ENCODE measurements at regions of chr17 and their contacts with region 1.

Region 1: DNA sequence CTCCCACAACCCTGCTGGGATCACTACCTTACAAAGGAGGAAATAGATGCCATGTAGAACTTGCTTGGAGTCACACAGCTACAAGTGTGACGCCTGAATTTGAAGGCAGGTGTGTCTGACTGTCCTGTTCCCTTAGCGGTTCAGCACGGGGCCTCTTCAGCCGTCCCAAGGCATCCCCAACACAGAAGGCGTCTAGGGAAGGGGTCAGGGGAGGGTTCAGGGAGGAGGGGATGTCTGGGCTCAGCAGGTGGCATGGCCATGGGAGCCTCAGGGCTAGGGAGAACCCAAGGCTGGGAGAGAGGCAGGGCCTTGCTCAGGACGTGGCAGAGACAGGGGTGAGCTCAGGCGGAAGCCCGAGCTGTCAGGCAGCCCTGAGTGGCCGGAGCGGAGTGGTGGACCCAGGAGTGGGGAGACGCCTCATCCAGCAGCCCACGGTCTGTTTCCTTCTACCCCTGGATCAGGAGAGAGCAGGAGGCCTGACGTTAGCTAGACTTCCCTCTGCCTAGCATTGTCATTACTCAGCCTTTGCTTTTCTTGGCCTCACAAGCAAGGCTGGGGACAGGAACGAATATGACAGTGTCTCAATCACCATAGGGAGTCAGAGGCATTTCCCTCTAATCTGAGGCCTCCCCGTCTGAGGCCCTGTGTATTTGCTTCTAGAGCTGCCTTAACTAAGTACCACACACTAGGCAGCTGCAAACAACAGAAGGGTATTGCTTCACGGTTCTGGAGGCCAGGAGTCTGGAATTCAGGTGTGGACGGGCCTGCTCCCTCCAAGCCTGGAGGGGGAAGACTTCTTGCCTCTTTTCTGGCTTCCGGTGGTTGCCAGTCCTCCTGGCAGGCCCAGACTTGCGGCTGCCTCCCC is 31.3 kb upstream of the ANKRD40CL start:
- DNase-seq: peak; percentile 85
- H3K4me3 ChIP-seq: no peak overlapping the region
- H3K27ac ChIP-seq: peak overlapping the region; percentile 53
- H3K4me1 ChIP-seq: peaks cover 27% of the 10 kb centered on the region
- H3K27me3 ChIP-seq: no peaks in the 10 kb centered on the region
- CTCF ChIP-seq: no peak

Region 2: GRCh38 chr17:50699410-50700074 is 99.1 kb before region 1 on chr17:
- CTCF ChIA-PET with region 1: no interaction called
- dilution Hi-C with region 1: loop called (anchors 5 kb)
- in situ Hi-C with region 1: no loop called
- intact Hi-C with region 1: no loop called
- DNase-seq: no peak
- H3K4me3 ChIP-seq: no peak overlapping the region
- H3K27ac ChIP-seq: no peak overlapping the region
- H3K4me1 ChIP-seq: peaks cover 8% of the 10 kb centered on the region
- H3K27me3 ChIP-seq: no peaks in the 10 kb centered on the region
- CTCF ChIP-seq: no peak

Region 3: GRCh38 chr17:50816771-50817751 is 18.4 kb after region 1 on chr17:
- CTCF ChIA-PET with region 1: no interaction called
- dilution Hi-C with region 1: no loop called
- in situ Hi-C with region 1: no loop called
- intact Hi-C with region 1: loop called (anchors 2 kb)
- DNase-seq: no peak
- H3K4me3 ChIP-seq: no peak overlapping the region
- H3K27ac ChIP-seq: peak overlapping the region; percentile 58
- H3K4me1 ChIP-seq: peaks cover 18% of the 10 kb centered on the region
- H3K27me3 ChIP-seq: no peaks in the 10 kb centered on the region
- CTCF ChIP-seq: peak; percentile 43 to 63

Region 4: DNA sequence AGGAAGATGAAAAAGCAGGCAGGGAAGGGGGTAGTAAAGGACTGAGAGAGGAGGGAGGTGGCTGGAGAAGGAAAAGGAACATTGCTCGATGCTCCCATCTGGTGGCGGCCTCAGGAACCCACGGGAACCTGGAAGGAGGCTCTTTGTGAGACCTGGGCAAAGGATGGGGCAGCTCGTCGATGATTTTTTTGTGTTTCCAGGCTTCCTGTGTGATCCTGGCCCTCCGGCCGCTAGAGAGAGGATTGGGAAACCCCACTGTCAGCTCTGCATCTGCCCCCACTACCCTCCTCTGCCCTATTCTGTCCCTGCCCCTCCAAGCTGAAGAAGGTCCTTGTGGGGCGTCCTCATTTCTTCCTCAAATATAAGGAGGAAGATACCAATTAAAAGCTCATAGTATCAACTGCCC is 43.3 kb after region 1 on chr17:
- CTCF ChIA-PET with region 1: interaction called, 7 read pairs
- dilution Hi-C with region 1: loop called (anchors 5 kb)
- in situ Hi-C with region 1: no loop called
- intact Hi-C with region 1: no loop called
- DNase-seq: peak; percentile 51
- H3K4me3 ChIP-seq: no peak overlapping the region
- H3K27ac ChIP-seq: no peak overlapping the region
- H3K4me1 ChIP-seq: peaks cover 28% of the 10 kb centered on the region
- H3K27me3 ChIP-seq: no peaks in the 10 kb centered on the region
- CTCF ChIP-seq: peak; percentile 86 to 92

Region 5: DNA sequence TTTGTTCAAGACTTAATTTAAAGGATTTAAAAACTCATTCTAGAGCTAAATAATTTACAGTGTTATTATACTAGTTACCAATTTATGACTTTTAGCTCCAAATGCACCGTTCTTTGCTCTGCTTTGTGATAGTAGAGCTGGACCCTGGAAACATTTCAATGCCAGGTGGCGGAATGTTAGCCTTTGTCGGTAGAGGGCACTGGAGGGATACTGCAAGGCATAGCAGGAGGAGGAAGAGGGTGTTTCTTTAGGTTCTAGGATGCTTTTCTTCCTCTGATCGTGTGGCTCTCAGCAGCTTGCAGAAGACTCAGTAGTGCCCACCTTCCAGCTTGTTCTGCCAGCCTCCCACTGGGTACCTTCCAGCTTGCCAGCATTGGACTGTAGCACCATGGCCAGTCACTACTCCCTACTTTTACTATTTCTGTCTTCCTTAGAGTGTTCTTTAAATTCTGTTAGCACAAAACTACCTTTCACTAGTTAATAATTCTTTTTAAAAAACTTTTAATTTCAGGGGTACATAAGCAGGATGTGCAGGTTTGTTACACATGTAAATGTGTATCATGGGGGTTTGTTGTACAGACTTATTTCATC is 787.0 kb after region 1 on chr17:
- CTCF ChIA-PET with region 1: no interaction called
- dilution Hi-C with region 1: no loop called
- in situ Hi-C with region 1: no loop called
- intact Hi-C with region 1: no loop called
- DNase-seq: peak; percentile 21
- H3K4me3 ChIP-seq: no peak overlapping the region
- H3K27ac ChIP-seq: no peak overlapping the region
- H3K4me1 ChIP-seq: no peaks in the 10 kb centered on the region
- H3K27me3 ChIP-seq: no peaks in the 10 kb centered on the region
- CTCF ChIP-seq: peak; percentile 86 to 96